ENCODE measurements at regions of chr10 and their contacts with region 1.

Region 1: GRCh38 chr10:77168161-77168560 is 469.4 kb downstream of the KCNMA1 start:
- DNase-seq: no peak
- H3K4me3 ChIP-seq: no peak overlapping the region
- H3K27ac ChIP-seq: no peak overlapping the region
- H3K4me1 ChIP-seq: no peaks in the 10 kb centered on the region
- H3K27me3 ChIP-seq: no peaks in the 10 kb centered on the region
- CTCF ChIP-seq: no peak
- POLR2A ChIP-seq: no peak

Region 2: DNA sequence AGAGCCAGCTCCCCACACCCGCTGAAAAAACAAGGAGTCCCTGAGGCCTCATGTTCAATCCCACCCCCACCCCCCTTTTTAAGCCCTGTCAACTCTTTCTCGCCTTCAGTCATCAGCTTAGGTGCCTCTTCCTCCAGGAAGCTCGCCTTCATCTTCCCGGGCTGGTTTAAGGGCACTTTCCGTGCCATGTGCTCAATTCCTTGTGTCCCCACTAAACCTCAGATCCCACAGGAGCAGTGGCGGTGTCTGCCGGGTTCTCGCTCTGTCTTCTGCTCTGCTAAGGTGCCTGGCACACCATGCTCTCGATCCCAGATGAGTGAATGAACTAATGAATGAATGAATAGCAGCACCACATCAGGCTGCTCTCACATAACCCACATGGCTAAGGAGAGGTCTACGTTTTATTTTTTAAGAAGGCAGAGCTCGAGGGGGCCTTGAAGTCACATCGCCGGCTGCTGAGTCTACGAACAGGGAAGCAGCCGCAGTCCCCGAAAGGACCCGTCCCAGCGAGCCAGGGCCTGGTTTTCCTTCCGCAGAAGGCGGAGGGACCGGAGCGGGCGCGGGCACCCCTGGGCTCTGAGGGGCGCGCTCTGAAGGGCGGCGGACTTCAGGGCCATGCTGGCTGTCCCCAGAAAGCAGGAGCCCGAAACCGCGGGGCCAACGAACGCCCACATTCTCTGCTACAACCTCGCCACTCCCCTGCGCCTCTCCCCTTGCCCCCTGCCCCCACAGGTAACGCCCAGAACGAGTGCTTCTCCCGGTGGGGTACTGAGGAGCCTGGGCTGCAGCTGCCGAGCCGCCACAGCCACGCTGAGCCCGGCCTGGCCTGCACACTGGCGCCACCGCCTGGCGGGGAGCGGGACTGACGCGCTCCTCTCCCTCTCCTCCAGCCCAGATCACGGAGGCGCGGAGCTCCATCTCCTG is 542.9 kb after region 1 on chr10:
- intact Hi-C with region 1: loop called (anchors 2 kb)
- DNase-seq: peak; percentile 61
- H3K4me3 ChIP-seq: peak overlapping the region; percentile 30 to 34
- H3K27ac ChIP-seq: peak overlapping the region in 1 of 2 donors; percentile 20
- H3K4me1 ChIP-seq: no peaks in the 10 kb centered on the region
- H3K27me3 ChIP-seq: no peaks in the 10 kb centered on the region
- CTCF ChIP-seq: peak; percentile 73 to 94 (median 90)
- POLR2A ChIP-seq: no peak

Measured in prostate gland (tissue), 2 donors.